ENCODE measurements at regions of chr22 and their contacts with region 1.

Region 1: GRCh38 chr22:49992921-49993648 is 19.5 kb downstream of the IL17REL start:
- DNase-seq: peak; percentile 51 to 87 (median 67)
- ATAC-seq: peak; percentile 95
- H3K4me3 ChIP-seq: no peak overlapping the region
- H3K4me3 Mint-ChIP-seq: no peak overlapping the region
- H3K27ac ChIP-seq: no peak overlapping the region
- H3K27ac Mint-ChIP-seq: no peak overlapping the region
- H3K4me1 ChIP-seq: peaks cover 14% of the 10 kb centered on the region
- H3K4me1 Mint-ChIP-seq: peaks cover 6% of the 10 kb centered on the region
- H3K27me3 ChIP-seq: no peaks in the 10 kb centered on the region
- H3K27me3 Mint-ChIP-seq: peaks cover 4% of the 10 kb centered on the region
- CTCF ChIP-seq: peak; percentile 75

Region 2: DNA sequence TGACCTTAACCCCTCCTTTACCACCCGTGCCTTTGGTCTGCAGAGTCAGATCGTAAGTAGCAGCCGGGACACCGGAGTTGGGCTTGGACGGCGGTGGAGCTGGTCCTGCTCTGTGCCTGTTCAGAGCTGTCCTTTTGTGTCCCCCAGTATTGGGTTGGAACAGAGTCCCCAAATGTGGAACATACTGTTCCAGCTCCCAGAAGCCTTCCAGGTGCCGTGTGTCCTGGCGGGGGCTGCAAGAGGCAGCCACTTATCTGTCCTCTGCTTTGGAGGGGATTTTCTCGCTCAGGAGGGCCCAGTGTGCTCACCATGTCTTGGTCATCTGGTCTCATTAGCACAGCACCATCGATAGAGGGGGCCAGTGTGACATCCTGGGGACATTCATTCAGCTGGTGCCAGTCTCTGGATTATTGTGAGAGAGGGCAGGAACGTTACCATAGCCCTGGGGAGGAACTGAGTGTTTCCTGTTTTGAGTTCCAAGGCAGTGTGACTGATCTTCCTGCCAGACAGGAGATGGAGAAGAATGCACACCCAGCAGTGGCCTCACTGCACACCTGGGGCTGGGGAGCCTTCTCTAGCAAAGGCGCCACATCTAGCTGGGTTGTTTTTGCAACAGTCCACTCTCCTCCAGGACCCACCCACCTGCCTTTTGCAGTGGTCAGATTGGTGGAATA is 62.2 kb before region 1 on chr22:
- CTCF ChIA-PET with region 1: interaction called, 8 read pairs
- POLR2A ChIA-PET with region 1: interaction called, 3 read pairs
- intact Hi-C with region 1: loop called (anchors 1 kb)
- DNase-seq: peak in 12 of 14 experiments; percentile 22 to 83 (median 48)
- ATAC-seq: peak; percentile 37
- H3K4me3 ChIP-seq: no peak overlapping the region
- H3K4me3 Mint-ChIP-seq: peak overlapping the region; percentile 73
- H3K27ac ChIP-seq: peak overlapping the region in 1 of 2 donors; percentile 39
- H3K27ac Mint-ChIP-seq: peak overlapping the region; percentile 89
- H3K4me1 ChIP-seq: peaks cover 60% of the 10 kb centered on the region
- H3K4me1 Mint-ChIP-seq: peaks cover 42% of the 10 kb centered on the region
- H3K27me3 ChIP-seq: no peaks in the 10 kb centered on the region
- H3K27me3 Mint-ChIP-seq: no peaks in the 10 kb centered on the region
- CTCF ChIP-seq: peak; percentile 59

Measured in CD4-positive, alpha-beta T cell (primary cell).